ENCODE measurements at regions of chr3 and their contacts with region 1.

Region 1: GRCh38 chr3:32947789-32948238 is 3.6 kb upstream of the CCR4 start:
- DNase-seq: peak; percentile 83
- H3K4me3 Mint-ChIP-seq: no peak overlapping the region
- H3K27ac Mint-ChIP-seq: peak overlapping the region; percentile 53
- H3K4me1 Mint-ChIP-seq: peaks cover 40% of the 10 kb centered on the region
- H3K27me3 Mint-ChIP-seq: no peaks in the 10 kb centered on the region

Region 2: DNA sequence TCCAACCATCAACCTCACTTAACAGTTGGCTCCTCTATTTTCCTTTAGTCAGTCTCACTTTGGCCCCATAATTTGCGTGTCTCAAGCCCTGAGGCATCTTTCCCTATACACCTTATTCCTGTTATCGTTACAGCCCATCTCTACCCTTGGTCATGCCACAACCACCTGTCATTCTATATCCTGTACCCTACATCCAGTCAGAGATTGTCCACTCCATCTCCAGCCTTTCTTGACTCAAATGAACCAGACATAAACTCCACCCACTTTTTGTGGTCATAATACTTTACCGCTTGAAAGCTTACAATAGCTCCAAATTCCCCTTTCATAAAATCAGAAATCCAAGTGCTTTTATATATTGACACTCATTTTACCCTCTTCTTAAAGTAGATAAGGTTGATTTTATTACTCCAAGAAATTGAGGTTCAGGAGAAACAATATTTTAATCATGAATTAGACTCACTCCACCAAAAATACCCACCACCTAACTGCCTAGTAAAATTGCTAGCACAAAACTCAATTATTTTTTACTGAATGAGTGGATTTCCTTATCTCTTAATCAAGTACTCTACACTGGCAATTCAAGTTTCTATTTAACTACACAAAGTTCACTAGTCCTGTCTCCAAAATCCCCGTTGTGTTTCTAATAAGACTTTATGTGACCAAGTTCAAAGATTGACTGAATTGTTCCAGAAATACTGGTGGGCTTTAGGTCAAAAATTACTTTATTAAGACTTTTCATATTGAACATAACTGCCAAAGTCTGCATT is 12.8 kb after region 1 on chr3:
- intact Hi-C with region 1: loop called (anchors 1 kb)
- DNase-seq: no peak
- H3K4me3 Mint-ChIP-seq: peak overlapping the region; percentile 73
- H3K27ac Mint-ChIP-seq: peak overlapping the region; percentile 99
- H3K4me1 Mint-ChIP-seq: peaks cover 62% of the 10 kb centered on the region
- H3K27me3 Mint-ChIP-seq: no peaks in the 10 kb centered on the region

Region 3: DNA sequence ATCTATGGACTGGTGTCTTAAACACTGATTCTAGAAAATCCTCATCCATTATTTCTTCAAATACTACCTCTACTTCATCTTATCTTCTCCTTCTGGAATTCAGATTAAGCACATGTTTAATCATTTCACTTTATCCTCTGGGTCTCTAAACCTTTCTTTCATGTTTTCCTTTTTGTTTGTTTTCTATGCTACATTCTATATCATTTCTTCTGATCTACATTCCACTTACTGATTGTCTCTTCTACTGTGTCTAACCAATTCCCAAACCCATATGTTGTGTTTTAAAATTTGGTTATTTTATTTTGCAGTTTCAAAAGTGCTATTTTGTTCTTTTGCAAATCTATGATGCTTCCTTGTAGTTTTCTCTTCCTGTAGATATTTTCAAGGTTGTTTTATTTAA is 35.3 kb after region 1 on chr3:
- intact Hi-C with region 1: no loop called
- DNase-seq: no peak
- H3K4me3 Mint-ChIP-seq: no peak overlapping the region
- H3K27ac Mint-ChIP-seq: no peak overlapping the region
- H3K4me1 Mint-ChIP-seq: peaks cover 18% of the 10 kb centered on the region
- H3K27me3 Mint-ChIP-seq: no peaks in the 10 kb centered on the region

Region 4: DNA sequence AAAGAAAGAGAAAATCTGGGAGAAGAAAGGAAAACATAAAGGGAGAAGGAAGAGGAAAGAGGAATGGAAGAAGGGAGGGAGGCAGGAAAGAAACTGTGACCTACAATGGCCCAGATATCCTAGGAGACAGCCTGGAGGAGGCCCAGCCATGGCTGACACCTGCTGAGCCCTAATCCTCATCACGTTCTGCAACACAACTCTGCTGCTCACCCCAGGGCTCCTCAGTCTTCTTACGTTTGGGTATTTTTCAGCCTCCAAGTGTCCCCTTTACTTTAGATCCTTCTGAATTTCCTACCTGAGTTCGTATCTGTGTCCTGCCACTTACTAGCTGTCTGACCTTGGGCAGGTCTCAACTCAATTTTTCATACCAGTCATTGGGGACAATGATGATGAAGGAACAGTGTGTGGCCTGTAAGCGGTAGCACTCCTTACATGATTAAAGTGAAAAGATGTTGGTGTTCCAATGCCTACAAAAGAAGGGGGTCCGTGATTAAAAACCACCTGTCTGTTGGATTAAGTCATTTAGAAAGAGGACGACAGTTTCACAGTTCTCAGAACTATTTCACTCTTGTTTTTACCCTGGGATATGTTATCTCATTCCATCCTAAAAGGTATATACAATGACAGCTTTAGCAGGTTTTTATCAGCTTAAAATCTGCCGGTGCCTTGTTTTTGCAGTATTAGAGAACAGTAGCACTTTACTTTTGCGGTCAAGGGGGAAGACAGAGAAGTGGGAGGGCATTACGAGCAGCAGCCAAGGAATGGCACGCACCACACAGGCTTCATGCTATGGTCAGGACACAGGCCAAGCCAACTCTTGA is 51.0 kb after region 1 on chr3:
- intact Hi-C with region 1: loop called (anchors 1 kb)
- DNase-seq: no peak
- H3K4me3 Mint-ChIP-seq: peak overlapping the region; percentile 35
- H3K27ac Mint-ChIP-seq: peak overlapping the region; percentile 92
- H3K4me1 Mint-ChIP-seq: peaks cover 82% of the 10 kb centered on the region
- H3K27me3 Mint-ChIP-seq: no peaks in the 10 kb centered on the region

Region 5: DNA sequence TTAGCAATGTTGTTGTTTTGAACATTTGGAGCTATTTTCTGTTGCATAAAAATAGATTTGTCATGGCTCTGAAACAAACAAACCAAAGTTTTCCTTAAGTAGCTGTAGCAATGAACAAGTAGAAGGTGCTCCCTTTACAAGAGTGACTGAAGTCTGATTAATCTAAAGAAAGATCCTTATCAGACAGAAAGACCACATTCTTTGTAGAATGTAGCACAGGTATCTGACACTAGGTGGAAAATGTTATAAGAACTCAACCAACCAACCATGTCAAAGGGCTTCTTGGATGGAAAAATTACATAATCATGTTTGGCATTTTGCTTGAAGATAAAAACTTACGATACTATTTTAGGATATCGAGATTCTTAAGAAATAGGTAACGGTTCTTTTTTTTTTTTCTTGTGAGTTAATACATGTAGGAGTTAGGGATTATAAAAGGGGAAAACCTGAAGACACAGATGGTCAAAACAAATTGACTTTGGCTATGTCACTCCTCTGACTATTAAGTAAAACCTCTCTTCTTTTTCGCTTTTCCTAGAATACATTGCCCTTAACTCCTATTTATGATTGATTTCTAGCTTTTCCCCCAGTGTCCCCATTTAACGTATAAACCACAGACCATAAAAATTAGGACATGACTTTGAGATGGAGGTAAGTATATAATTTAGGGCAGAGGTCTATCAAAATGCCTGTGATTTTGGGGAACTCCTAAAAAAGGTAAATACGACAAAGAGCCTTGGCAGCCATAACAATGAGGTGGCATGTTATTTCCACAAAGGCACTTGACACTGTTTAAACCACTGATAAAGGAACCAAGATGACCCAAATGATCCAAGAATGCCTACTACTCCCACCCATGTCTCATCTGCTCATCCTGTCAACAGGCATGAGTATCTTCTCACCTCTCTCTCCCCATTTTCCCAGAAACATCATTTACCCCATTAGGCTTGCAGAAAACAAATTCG is 75.6 kb after region 1 on chr3:
- intact Hi-C with region 1: loop called (anchors 1 kb)
- DNase-seq: no peak
- H3K4me3 Mint-ChIP-seq: peak overlapping the region; percentile 14
- H3K27ac Mint-ChIP-seq: peak overlapping the region; percentile 89
- H3K4me1 Mint-ChIP-seq: peaks cover 54% of the 10 kb centered on the region
- H3K27me3 Mint-ChIP-seq: no peaks in the 10 kb centered on the region

Region 6: GRCh38 chr3:33063651-33064051 is 115.8 kb after region 1 on chr3:
- intact Hi-C with region 1: loop called (anchors 1 kb)
- DNase-seq: peak; percentile 60
- H3K4me3 Mint-ChIP-seq: peak overlapping the region; percentile 9
- H3K27ac Mint-ChIP-seq: peak overlapping the region; percentile 83
- H3K4me1 Mint-ChIP-seq: peaks cover 67% of the 10 kb centered on the region
- H3K27me3 Mint-ChIP-seq: no peaks in the 10 kb centered on the region

Region 7: GRCh38 chr3:33131331-33132018 is 183.7 kb after region 1 on chr3:
- intact Hi-C with region 1: loop called (anchors 5 kb)
- DNase-seq: no peak
- H3K4me3 Mint-ChIP-seq: no peak overlapping the region
- H3K27ac Mint-ChIP-seq: no peak overlapping the region
- H3K4me1 Mint-ChIP-seq: peaks cover 4% of the 10 kb centered on the region
- H3K27me3 Mint-ChIP-seq: no peaks in the 10 kb centered on the region

Region 8: GRCh38 chr3:33440323-33441232 is 492.8 kb after region 1 on chr3 and contains the start of gene UBP1:
- intact Hi-C with region 1: loop called (anchors 2 kb)
- DNase-seq: peak; percentile 99
- H3K4me3 Mint-ChIP-seq: peak within 1 kb of the TSS; percentile 100
- H3K27ac Mint-ChIP-seq: peak within 1 kb of the TSS; percentile 100
- H3K4me1 Mint-ChIP-seq: peaks cover 37% of the 10 kb centered on the region
- H3K27me3 Mint-ChIP-seq: no peaks in the 10 kb centered on the region
- total RNA-seq, gene UBP1: 59.2 and 63.8 TPM in 2 replicates